Heart right ventricle (tissue), 16 donors: ENCODE measurements at regions of chr13 and their contacts with region 1.

Region 1: GRCh38 chr13:114226699-114227323 is 7.9 kb upstream of the CDC16 start:
- DNase-seq: peak; percentile 79 to 86
- ATAC-seq: peak; percentile 77 to 92 (median 90)
- H3K4me3 ChIP-seq: no peak overlapping the region
- H3K27ac ChIP-seq: no peak overlapping the region
- H3K4me1 ChIP-seq: peaks cover 0 to 41% (median 0%) of the 10 kb centered on the region in 9 donors
- H3K27me3 ChIP-seq: peaks cover 0 to 43% (median 28%) of the 10 kb centered on the region in 7 donors
- CTCF ChIP-seq: peak; percentile 82 to 94 (median 90)

Region 2: GRCh38 chr13:113951246-113951999 is 275.4 kb before region 1 on chr13:
- intact Hi-C with region 1: loop called (anchors 1 to 5 kb)
- DNase-seq: peak; percentile 83 to 89
- ATAC-seq: peak; percentile 92 to 96 (median 94)
- H3K4me3 ChIP-seq: peak overlapping the region in 5 of 10 donors; percentile 17 to 32 (median 24)
- H3K27ac ChIP-seq: no peak overlapping the region
- H3K4me1 ChIP-seq: peaks cover 0 to 20% (median 11%) of the 10 kb centered on the region in 9 donors
- H3K27me3 ChIP-seq: no peaks in the 10 kb centered on the region
- CTCF ChIP-seq: peak; percentile 80 to 95 (median 88)

Region 3: GRCh38 chr13:113969973-113970611 is 256.7 kb before region 1 on chr13:
- intact Hi-C with region 1: loop called in 1 of 10 experiments (anchors 5 kb)
- DNase-seq: no peak
- ATAC-seq: peak in 6 of 8 donors; percentile 14 to 32 (median 22)
- H3K4me3 ChIP-seq: no peak overlapping the region
- H3K27ac ChIP-seq: peak overlapping the region in 3 of 10 donors; percentile 38 to 63 (median 52)
- H3K4me1 ChIP-seq: peaks cover 3 to 16% (median 8%) of the 10 kb centered on the region in 9 donors
- H3K27me3 ChIP-seq: no peaks in the 10 kb centered on the region
- CTCF ChIP-seq: no peak

Region 4: GRCh38 chr13:114185182-114185971 is 41.4 kb before region 1 on chr13:
- intact Hi-C with region 1: no loop called
- DNase-seq: peak; percentile 24 to 58
- ATAC-seq: peak; percentile 46 to 96 (median 90)
- H3K4me3 ChIP-seq: no peak overlapping the region
- H3K27ac ChIP-seq: peak overlapping the region in 1 of 10 donors; percentile 10
- H3K4me1 ChIP-seq: no peaks in the 10 kb centered on the region
- H3K27me3 ChIP-seq: peaks cover 0 to 5% (median under 1%) of the 10 kb centered on the region in 7 donors
- CTCF ChIP-seq: no peak